ENCODE measurements at regions of chr3 and their contacts with region 1.

Region 1: GRCh38 chr3:58188173-58188564 is 22.6 kb downstream of the DNASE1L3 start:
- DNase-seq: no peak
- ATAC-seq: no peak

Region 2: DNA sequence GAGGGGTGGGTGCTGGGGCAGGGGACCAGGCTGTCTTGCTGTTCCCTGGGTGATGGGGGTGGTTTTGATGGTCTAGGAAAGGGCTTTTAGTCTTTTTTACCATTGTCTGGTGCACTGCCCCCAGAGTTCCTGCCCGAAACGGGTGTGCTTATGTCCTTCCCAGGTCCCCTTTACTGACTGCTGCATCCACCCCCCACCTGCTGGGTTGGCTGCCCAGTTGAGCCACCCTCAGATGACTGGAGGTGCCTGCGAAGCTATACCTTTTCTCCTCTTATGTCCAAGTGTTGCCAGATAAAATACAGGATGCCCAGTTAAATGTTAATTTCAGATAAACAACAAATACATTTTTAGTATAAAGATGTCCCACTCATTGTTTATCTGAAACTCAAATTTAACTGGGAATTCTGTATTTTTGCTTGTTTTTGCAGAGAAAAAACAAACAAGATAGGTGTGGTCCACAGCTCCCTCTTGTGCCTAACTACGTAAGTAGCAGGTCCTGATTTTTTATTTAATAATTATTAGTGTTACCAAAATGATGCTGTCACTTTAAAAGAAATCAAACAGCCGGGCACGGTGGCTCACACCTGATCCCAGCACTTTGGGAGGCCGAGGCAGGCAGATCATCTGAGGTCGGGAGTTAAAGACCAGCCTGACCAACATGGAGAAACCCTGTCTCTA is 111.8 kb after region 1 on chr3:
- intact Hi-C with region 1: loop called (anchors 5 kb)
- DNase-seq: no peak
- ATAC-seq: no peak

Measured in left ventricle myocardium superior (tissue), 1 donor.